Sciatic nerve (tissue), 2 donors: ENCODE measurements at regions of chr7 and their contacts with region 1.

Region 1: DNA sequence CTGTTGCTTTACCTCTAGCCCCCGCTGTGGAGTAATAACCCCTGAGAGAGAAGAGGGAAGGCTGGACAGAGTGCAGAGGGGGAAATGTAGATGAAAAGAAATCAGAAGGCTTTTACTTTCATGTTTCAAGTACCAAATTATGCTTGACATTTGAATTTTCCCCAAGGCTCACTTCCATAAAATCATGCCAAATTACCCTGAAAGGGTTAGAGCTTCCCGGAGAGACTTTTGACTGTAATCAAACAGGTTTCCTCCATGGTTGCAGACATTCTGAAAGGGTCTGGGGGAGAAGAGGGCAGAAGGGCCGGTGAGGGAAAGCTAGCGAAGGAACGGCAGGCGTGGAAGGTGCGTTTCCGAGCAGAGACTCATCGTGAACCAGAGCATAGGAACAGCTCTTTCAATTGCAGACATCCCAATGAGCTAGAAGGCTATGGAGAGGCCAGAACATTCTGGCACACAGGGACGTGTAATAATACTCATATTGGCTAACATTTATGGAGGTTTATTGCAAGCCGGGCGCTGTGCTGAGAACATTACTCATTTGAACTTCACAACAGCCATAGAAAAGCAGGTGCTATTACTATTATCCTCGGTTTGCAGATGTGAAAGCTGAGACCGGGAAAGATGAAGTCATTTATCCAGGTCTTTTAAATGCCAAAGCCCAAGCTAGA is 620.8 kb upstream of the AUTS2 start:
- DNase-seq: peak; percentile 50
- ATAC-seq: peak; percentile 80

Region 2: DNA sequence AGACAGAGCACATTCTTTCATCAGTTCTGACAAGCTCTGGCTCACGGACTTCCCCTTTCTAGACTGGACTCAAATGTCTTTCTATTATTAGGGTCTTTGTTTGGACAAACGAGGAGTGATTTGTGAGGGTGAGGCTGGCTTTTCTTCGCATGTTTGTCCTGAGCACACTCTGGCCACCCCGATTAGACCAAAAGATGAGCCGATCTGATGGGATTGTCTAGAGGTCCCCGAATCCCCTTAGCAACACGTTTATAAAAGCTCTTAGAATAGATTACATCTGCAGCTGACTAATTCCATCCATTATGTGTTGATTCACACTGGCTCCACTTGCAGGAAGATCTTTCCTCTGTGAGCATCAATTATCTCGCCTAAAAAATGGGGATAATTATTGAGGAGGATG is 54.7 kb before region 1 on chr7:
- intact Hi-C with region 1: no loop called
- DNase-seq: no peak
- ATAC-seq: no peak

Region 3: DNA sequence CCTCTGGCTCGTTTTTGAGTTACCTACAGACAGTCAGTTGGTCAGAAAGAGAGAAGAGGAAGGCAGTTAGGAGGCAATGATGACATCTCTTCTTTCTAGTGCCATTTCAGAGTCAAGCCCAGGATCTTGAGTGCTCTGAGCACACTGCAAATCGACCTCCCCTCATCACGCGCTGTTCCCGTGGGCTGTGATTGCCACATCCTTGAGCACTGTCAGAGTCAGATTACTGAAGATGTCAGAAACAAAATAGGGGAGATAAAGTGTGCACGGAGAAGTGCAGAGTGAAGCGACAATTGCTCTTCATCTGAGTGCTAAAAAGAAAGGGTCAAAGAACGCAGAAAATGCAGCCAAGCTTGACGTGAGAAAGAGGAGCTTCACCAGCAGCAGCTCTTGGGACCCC is 41.0 kb before region 1 on chr7:
- intact Hi-C with region 1: loop called (anchors 1 kb)
- DNase-seq: no peak
- ATAC-seq: peak; percentile 45